Activated T-helper 2 cell treated with anti-CD3 and anti-CD28 coated beads, Interferon-gamma antibody, Interleukin-2, Interleukin-4, amounts not matched to agents 10 μg/mL and 5 μg/mL and 100 μg/mL, durations not matched to agents 14 hours and 24 hours and 36 hours (primary cell): ENCODE measurements at regions of chr5 and their contacts with region 1.

Region 1: GRCh38 chr5:151284392-151284967 is 19.1 kb downstream of the SLC36A3 start:
- DNase-seq: no peak
- H3K4me3 Mint-ChIP-seq: no peak overlapping the region
- H3K27ac Mint-ChIP-seq: no peak overlapping the region
- H3K4me1 Mint-ChIP-seq: peaks cover 6% of the 10 kb centered on the region
- H3K27me3 Mint-ChIP-seq: peaks cover 3% of the 10 kb centered on the region

Region 2: GRCh38 chr5:151174612-151175101 is 109.8 kb before region 1 on chr5:
- intact Hi-C with region 1: no loop called
- DNase-seq: no peak
- H3K4me3 Mint-ChIP-seq: no peak overlapping the region
- H3K27ac Mint-ChIP-seq: no peak overlapping the region
- H3K4me1 Mint-ChIP-seq: peaks cover 8% of the 10 kb centered on the region
- H3K27me3 Mint-ChIP-seq: no peaks in the 10 kb centered on the region

Region 3: DNA sequence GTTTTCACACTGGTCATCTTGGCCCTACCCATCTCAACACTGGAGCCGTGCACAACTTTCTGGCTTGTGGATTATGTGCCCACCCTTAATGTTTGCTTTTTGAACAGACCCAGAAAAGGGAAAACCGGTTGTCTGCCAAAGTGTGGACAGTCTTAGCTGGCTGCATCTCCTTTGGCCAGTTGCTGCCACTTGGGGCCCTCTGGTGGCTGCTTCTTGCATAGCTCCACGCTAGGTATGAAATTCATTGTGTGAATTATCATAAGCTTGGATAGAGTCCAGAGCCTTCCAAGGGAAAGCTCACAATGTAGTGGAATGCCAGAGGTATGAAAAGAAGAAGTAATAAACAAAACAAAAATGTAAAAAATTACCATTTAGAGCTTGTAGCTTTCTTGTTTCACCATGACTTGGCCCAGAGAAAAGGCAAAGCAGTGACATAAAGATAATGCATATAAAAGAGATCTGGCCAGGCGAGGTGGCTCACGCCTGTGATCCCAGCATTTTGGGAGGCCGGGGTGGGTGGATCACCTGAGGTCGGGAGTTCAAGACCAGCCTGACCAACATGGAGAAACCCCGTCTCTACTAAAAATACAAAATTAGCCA is 31.6 kb after region 1 on chr5:
- intact Hi-C with region 1: loop called (anchors 5 kb)
- DNase-seq: peak; percentile 18
- H3K4me3 Mint-ChIP-seq: no peak overlapping the region
- H3K27ac Mint-ChIP-seq: no peak overlapping the region
- H3K4me1 Mint-ChIP-seq: no peaks in the 10 kb centered on the region
- H3K27me3 Mint-ChIP-seq: peaks cover 14% of the 10 kb centered on the region